ENCODE measurements at regions of chr12 and their contacts with region 1.

Region 1: DNA sequence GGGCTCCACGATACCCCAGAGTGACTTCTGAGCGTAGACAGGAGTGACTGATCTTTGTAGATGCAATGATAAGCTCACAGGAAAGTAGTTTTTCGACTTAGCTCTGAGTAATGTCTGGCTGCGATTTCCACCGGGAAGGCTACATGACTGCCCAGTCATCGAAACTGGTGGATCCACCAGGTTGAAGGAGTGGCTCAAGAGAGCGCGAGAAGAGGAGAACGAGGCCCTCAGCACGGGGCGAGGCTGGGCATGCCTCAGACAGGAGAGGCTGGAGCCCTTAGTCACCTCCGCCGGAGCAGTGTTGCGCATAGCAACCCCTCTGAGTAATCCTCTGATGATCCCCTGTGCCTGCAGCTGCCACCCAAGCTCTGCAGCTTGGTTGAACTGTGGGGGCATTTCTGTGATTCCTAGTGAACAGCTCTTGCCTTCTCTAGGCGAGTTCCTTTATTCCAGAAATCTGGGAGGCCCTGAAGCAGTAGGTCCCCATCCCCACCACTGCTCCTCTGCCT is 25.6 kb downstream of the ELK3 start:
- DNase-seq: peak; percentile 99
- ATAC-seq: peak; percentile 98
- H3K4me3 ChIP-seq: peak overlapping the region; percentile 60
- H3K27ac ChIP-seq: peak overlapping the region; percentile 98
- H3K4me1 ChIP-seq: peaks cover 37% of the 10 kb centered on the region
- H3K27me3 ChIP-seq: no peaks in the 10 kb centered on the region
- CTCF ChIP-seq: no peak

Region 2: DNA sequence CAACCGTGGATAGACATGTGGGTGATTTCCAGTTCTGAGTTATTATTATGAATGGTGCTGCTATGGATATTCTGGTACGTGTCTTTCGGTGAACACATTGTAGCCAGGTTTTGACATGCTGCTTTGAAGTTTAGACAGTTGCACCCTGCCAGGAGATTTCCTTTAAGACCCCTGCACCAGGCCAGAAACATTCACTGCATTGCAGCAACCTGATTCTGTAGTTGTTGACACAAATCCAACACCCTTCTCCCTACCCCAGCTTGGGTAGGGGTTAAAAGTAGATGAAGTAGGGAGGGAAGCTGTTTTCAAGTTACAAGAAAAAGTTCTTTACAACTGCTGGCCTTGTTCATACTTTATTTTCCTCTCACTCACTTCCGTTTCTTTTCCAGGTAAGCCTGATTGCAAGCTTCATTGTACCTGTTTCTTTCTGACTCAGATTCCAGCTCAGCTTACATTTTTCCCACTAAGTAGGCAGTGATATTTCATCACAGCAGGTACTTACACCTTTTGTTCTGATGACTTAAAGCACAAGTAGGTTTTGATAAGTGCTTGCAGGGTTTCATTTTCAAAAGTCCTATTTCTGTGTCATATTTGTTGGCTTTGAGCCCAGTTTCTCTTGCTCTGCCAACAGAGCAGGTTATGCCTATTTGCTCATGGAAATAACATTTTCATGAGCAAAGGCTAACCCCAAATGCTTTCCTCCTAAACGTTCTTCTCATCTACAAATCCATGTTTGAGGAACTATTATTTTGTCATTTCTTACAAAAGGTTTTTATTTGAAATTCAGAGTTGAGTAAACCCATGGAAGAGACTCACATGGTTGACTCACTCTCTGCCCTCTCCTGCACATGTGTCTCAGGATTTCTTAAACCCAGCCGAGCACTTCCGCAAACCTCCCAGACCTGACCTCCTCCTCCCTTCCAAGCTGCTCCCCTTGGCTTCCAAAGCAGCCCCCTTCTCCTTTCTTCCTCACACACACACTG is 172.2 kb before region 1 on chr12:
- CTCF ChIA-PET with region 1: interaction called, 8 read pairs
- POLR2A ChIA-PET with region 1: no interaction called
- intact Hi-C with region 1: loop called (anchors 5 kb)
- DNase-seq: peak; percentile 97
- ATAC-seq: peak; percentile 69
- H3K4me3 ChIP-seq: peak overlapping the region; percentile 61
- H3K27ac ChIP-seq: peak overlapping the region; percentile 98
- H3K4me1 ChIP-seq: peaks cover 53% of the 10 kb centered on the region
- H3K27me3 ChIP-seq: no peaks in the 10 kb centered on the region
- CTCF ChIP-seq: no peak

Region 3: GRCh38 chr12:96061864-96062453 is 157.8 kb before region 1 on chr12:
- CTCF ChIA-PET with region 1: interaction called, 14 read pairs
- POLR2A ChIA-PET with region 1: no interaction called
- intact Hi-C with region 1: loop called (anchors 1 kb)
- DNase-seq: peak; percentile 89
- ATAC-seq: peak; percentile 92
- H3K4me3 ChIP-seq: no peak overlapping the region
- H3K27ac ChIP-seq: no peak overlapping the region
- H3K4me1 ChIP-seq: no peaks in the 10 kb centered on the region
- H3K27me3 ChIP-seq: no peaks in the 10 kb centered on the region
- CTCF ChIP-seq: peak; percentile 91

Region 4: DNA sequence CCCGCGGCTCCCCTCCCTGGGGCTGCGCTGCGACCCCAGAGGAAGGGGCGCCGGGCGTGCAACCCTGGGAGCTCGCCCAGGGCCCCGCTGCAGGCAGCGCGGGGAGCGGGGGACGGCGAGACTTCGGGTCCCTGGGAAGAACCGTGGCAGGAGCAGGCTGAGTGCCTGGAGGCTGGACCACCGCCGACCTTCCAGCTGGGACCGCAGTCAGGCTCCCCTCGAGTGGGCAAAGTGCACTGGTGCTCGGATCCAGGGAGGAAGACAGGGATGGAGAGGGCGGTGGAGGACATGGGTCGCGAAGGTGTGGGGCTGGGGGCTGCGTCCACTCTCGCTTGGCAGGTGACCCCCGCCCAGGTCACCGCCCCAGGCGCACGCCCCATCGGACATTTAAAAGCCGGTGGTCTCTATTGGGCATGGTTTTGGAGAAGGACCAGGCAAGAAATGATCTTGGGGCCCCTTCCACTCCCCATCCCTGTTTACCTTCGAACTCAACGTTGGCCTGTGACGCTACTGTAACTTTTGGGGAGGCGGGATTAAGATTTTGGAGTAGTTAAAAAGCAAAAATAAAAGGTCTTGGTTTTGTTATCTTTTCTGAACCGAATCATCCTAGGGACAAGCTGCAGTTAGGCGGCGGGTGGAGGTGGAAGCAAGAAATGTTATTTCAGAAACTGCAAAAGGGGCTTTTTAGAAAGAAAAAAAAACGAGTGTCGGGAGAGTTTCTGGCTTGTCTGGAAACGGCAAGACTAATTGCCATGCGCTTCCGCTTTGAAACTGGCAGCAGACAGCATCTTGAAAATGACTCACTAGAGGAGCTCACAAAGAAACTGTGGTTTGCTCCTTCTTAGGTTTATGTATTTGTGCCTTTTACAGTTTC is 24.5 kb before region 1 on chr12:
- CTCF ChIA-PET with region 1: interaction called, 3 read pairs
- POLR2A ChIA-PET with region 1: no interaction called
- intact Hi-C with region 1: loop called (anchors 2 kb)
- DNase-seq: peak; percentile 83
- ATAC-seq: peak; percentile 42
- H3K4me3 ChIP-seq: peak overlapping the region; percentile 96
- H3K27ac ChIP-seq: peak overlapping the region; percentile 98
- H3K4me1 ChIP-seq: peaks cover 37% of the 10 kb centered on the region
- H3K27me3 ChIP-seq: no peaks in the 10 kb centered on the region
- CTCF ChIP-seq: no peak

Region 5: DNA sequence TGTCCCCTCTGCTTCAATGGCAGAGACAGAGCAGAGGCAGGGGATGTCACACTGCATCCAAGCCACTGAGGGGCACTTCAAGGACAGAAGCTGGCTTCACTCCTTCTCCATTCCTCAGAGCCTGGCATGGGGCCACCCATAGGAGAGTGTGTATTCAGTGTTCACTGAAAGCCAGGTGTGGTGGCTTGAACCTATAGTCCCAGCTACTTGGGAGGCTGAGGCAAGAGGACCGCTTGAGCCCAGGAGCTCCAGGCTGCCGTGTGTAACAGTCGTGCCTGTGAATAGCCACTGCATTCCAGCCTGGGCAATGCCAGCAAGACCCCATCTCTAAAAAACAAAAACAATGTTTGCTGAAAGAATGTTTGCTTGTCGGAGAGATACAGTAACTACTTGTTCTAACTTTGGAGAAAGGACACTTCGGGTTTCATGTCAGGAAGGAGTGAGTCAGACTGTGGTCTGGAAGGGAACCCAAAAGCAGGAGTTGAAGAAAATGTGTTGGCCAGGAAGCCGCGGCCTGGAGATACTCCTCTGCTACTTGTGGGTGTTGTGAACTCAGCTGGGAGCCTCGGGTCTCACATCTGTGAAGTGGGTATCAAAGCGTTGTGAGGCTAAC is 17.8 kb after region 1 on chr12:
- CTCF ChIA-PET with region 1: interaction called, 7 read pairs
- POLR2A ChIA-PET with region 1: interaction called, 4 read pairs
- intact Hi-C with region 1: loop called (anchors 1 kb)
- DNase-seq: peak; percentile 93
- ATAC-seq: peak; percentile 94
- H3K4me3 ChIP-seq: peak overlapping the region; percentile 31; the same call in 1 of the 2 replicates
- H3K27ac ChIP-seq: peak overlapping the region; percentile 80
- H3K4me1 ChIP-seq: peaks cover 21% of the 10 kb centered on the region
- H3K27me3 ChIP-seq: no peaks in the 10 kb centered on the region
- CTCF ChIP-seq: no peak

Region 6: DNA sequence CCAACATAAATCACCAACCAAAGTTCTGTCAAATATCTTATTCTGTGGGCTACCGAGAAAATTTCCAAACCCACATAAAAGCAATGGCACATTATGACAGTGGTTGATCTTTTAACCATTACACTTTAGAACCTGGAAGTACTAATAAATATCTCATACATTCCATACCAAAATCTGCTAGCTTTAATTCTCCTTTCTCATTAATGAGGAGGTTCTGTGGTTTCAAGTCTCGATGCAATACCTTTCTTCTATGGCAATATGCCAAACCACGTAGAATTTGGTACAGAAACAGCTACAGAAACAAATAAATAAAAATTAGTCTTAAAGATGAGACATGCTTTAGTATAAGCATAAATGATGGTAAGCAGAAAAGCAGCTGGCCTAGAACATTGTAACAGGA is 75.1 kb after region 1 on chr12:
- CTCF ChIA-PET with region 1: no interaction called
- POLR2A ChIA-PET with region 1: no interaction called
- intact Hi-C with region 1: no loop called
- DNase-seq: peak; percentile 7
- ATAC-seq: no peak
- H3K4me3 ChIP-seq: no peak overlapping the region
- H3K27ac ChIP-seq: no peak overlapping the region
- H3K4me1 ChIP-seq: peaks cover 2% of the 10 kb centered on the region; the same call in 1 of the 2 replicates
- H3K27me3 ChIP-seq: no peaks in the 10 kb centered on the region
- CTCF ChIP-seq: no peak

Region 7: GRCh38 chr12:96501139-96501761 is 281.5 kb after region 1 on chr12:
- CTCF ChIA-PET with region 1: interaction called, 11 read pairs
- POLR2A ChIA-PET with region 1: no interaction called
- intact Hi-C with region 1: no loop called
- DNase-seq: peak; percentile 85
- ATAC-seq: peak; percentile 99
- H3K4me3 ChIP-seq: peak overlapping the region; percentile 14; the same call in 1 of the 2 replicates
- H3K27ac ChIP-seq: peak overlapping the region; percentile 84
- H3K4me1 ChIP-seq: peaks cover 27% of the 10 kb centered on the region
- H3K27me3 ChIP-seq: no peaks in the 10 kb centered on the region
- CTCF ChIP-seq: no peak

Region 8: DNA sequence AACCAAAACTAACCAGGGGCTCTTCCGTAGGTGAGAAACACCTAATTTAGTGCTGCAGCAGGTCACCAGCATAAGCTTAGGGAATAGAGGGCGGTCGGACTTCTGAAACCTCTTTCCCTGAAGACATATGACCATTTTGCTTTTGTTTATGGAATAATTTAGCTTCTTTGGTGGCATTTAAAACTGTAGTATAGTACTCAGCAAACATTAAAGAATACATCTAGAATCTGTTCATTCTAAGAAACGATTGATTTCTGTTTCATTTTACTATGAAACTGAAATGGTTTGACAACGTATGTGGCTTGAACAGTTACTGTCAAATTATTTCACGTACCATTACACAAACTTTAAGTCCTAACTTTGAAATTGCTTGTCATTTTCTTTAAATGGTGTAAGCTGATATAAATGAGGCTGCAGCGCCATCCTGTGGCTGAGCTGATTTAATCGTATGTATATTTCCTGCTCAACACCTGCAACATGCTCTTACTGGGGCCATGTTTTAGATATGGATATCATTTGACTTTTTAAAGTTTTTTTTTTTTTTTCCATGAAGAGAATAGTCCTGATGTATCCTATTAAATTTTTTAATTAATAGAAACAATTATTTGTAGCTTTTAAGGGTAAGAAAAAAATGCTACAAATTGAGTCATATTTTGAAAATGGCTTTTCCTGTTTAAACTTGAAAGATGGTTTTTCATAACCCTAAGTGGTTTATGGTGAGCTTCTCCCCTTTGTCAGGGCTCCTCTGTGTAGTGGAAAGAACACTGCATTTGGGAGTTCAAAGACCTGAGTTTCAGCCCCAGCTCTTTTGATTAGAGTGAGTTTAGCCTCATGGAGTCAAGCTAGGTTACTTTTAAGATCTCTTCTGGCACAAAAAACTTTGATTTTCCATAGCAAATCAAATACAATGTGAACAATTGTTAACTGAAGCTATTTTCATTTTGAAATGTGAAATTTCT is 297.0 kb after region 1 on chr12:
- CTCF ChIA-PET with region 1: interaction called, 13 read pairs
- POLR2A ChIA-PET with region 1: no interaction called
- intact Hi-C with region 1: loop called (anchors 1 kb)
- DNase-seq: peak; percentile 91
- ATAC-seq: peak; percentile 69
- H3K4me3 ChIP-seq: peak overlapping the region; percentile 46
- H3K27ac ChIP-seq: no peak overlapping the region
- H3K4me1 ChIP-seq: peaks cover 10% of the 10 kb centered on the region; the same call in 1 of the 2 replicates
- H3K27me3 ChIP-seq: no peaks in the 10 kb centered on the region
- CTCF ChIP-seq: peak; percentile 88

Measured in PC-3 (cell line).